Calu3 (cell line): ENCODE measurements at regions of chr10 and their contacts with region 1.

Region 1: GRCh38 chr10:55491712-55492111 is 690.7 kb upstream of the PCDH15 start:
- DNase-seq: no peak
- H3K4me3 Mint-ChIP-seq: no peak overlapping the region
- H3K27ac Mint-ChIP-seq: no peak overlapping the region
- H3K4me1 Mint-ChIP-seq: no peaks in the 10 kb centered on the region
- H3K27me3 Mint-ChIP-seq: no peaks in the 10 kb centered on the region
- CTCF ChIP-seq: no peak

Region 2: DNA sequence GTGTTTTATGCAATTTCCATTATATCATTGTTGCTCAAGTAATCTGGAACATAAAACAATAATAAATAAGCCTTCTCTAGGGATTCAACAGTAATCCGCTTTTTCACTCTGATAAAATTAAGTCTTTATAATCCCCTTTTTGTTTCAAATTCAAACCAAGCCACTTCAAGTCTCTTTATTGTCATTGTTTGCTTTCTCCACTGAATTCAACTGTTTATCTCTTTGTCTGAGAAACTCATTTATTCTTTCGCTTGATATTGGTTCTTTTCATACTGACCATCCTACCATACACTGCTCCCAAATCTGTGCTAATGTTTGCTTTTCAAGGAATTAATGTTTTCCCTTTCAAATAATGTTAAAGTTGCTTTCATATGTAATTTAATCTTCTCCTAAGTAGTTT is 140.3 kb before region 1 on chr10:
- CTCF ChIA-PET with region 1: no interaction called
- intact Hi-C with region 1: no loop called
- DNase-seq: no peak
- H3K4me3 Mint-ChIP-seq: no peak overlapping the region
- H3K27ac Mint-ChIP-seq: no peak overlapping the region
- H3K4me1 Mint-ChIP-seq: no peaks in the 10 kb centered on the region
- H3K27me3 Mint-ChIP-seq: no peaks in the 10 kb centered on the region
- CTCF ChIP-seq: no peak

Region 3: DNA sequence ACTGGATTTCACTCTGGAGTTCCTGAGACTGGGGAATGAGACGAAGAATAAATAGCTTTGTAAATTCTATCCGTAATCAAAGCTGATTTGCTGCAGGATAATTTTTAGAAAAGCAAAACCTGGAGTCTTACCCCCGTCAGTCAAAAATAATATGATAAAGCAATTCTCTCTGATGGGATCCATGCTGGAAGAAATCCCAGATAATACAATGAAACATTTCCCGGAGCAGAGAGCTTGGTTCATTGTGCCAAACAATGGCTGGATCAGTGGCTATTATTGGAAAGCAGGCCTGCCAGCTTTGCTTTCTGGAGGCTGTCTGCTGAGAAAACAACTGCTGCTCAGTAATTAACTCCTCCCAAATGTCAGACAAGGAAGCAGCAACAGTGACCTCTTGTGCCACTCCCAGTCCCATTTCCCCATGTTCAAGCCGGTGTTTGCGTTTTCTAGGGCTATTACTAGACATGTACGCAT is 81.3 kb before region 1 on chr10:
- CTCF ChIA-PET with region 1: no interaction called
- intact Hi-C with region 1: loop called (anchors 5 kb)
- DNase-seq: peak; percentile 34
- H3K4me3 Mint-ChIP-seq: no peak overlapping the region
- H3K27ac Mint-ChIP-seq: no peak overlapping the region
- H3K4me1 Mint-ChIP-seq: no peaks in the 10 kb centered on the region
- H3K27me3 Mint-ChIP-seq: no peaks in the 10 kb centered on the region
- CTCF ChIP-seq: no peak

Region 4: GRCh38 chr10:55441777-55442176 is 49.9 kb before region 1 on chr10:
- CTCF ChIA-PET with region 1: no interaction called
- intact Hi-C with region 1: no loop called
- DNase-seq: no peak
- H3K4me3 Mint-ChIP-seq: no peak overlapping the region
- H3K27ac Mint-ChIP-seq: no peak overlapping the region
- H3K4me1 Mint-ChIP-seq: peaks cover 12% of the 10 kb centered on the region
- H3K27me3 Mint-ChIP-seq: no peaks in the 10 kb centered on the region
- CTCF ChIP-seq: no peak